ENCODE measurements at regions of chr17 and their contacts with region 1.

Region 1: DNA sequence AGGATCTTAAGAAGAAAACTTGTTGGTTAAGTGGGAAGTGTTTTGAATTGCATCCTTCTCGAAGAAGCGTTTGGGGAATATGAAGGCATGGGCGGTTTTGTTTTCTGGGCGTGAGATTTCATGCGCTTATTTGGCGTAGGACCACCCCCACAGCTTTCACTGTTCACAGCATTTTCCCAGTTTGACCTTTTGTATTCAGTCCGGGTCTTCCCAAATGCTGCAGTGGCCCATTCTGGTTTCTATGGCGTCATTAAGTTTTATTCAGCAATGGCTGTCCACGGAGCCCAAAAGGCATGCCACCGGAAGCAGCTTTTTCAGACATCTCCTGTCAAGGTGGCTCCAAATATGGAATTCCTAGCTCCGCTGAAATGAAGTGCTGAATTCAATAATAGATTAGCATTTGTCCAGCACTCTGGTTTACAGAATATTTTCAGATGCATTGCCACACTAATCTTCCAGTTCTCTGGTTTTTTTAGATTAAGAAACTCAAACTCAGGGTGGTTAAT is 90.6 kb upstream of the FBXO47 start:
- DNase-seq: no peak
- H3K4me3 ChIP-seq: peak overlapping the region; percentile 72
- H3K4me3 Mint-ChIP-seq: peak overlapping the region in 6 of 7 donors; percentile 48 to 90 (median 78)
- H3K27ac ChIP-seq: no peak overlapping the region
- H3K27ac Mint-ChIP-seq: peak overlapping the region in 3 of 8 donors; percentile 3 to 91 (median 43)
- H3K4me1 ChIP-seq: peaks cover 7% of the 10 kb centered on the region
- H3K4me1 Mint-ChIP-seq: peaks cover 4 to 16% (median 11%) of the 10 kb centered on the region in 3 donors
- H3K27me3 ChIP-seq: no peaks in the 10 kb centered on the region
- H3K27me3 Mint-ChIP-seq: peaks cover under 1% of the 10 kb centered on the region in 2 donors

Region 2: GRCh38 chr17:38943607-38944006 is 114.1 kb before region 1 on chr17:
- CTCF ChIA-PET with region 1: no interaction called
- POLR2A ChIA-PET with region 1: no interaction called
- DNase-seq: no peak
- H3K4me3 ChIP-seq: no peak overlapping the region
- H3K4me3 Mint-ChIP-seq: no peak overlapping the region
- H3K27ac ChIP-seq: no peak overlapping the region
- H3K27ac Mint-ChIP-seq: no peak overlapping the region
- H3K4me1 ChIP-seq: no peaks in the 10 kb centered on the region
- H3K4me1 Mint-ChIP-seq: peaks cover 0 to 2% (median 0%) of the 10 kb centered on the region in 3 donors
- H3K27me3 ChIP-seq: no peaks in the 10 kb centered on the region
- H3K27me3 Mint-ChIP-seq: no peaks in the 10 kb centered on the region

Region 3: GRCh38 chr17:39001703-39002637 is 55.8 kb before region 1 on chr17:
- CTCF ChIA-PET with region 1: no interaction called
- POLR2A ChIA-PET with region 1: no interaction called
- DNase-seq: no peak
- H3K4me3 ChIP-seq: no peak overlapping the region
- H3K4me3 Mint-ChIP-seq: no peak overlapping the region
- H3K27ac ChIP-seq: peak overlapping the region; percentile 40
- H3K27ac Mint-ChIP-seq: peak overlapping the region in 1 of 8 donors; percentile 72
- H3K4me1 ChIP-seq: peaks cover 25% of the 10 kb centered on the region
- H3K4me1 Mint-ChIP-seq: peaks cover 10 to 22% (median 14%) of the 10 kb centered on the region in 3 donors
- H3K27me3 ChIP-seq: no peaks in the 10 kb centered on the region
- H3K27me3 Mint-ChIP-seq: peaks cover 7 to 34% of the 10 kb centered on the region in 2 donors

Region 4: DNA sequence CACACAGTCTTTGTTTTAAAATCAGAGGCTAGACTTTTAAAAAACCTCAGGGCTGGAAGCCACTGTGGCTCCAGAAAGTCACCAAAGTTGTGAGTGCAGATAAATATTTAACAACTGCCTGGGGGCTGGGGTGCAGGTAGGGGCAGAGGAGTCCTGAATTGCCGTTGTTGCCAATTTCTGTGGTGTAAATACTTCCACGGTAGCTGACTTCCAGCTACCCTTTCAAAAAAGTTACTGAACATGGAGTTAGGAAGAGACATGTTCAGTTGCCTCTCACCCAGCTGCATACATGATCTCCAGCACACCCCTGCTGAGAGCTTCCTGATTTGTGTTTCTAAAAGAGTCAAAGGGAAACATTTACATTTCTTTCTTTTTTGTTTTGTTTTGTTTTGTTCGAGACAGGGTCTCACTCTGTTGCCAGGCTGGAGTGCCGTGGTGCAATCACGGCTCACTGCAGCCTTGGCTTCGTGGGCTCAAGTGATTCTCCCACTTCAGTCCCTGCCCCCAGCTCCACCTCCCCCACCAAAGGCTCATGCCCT is 35.0 kb after region 1 on chr17:
- CTCF ChIA-PET with region 1: interaction called, 11 read pairs
- POLR2A ChIA-PET with region 1: no interaction called
- DNase-seq: peak in 2 of 5 donors; percentile 21 to 61
- H3K4me3 ChIP-seq: peak overlapping the region; percentile 49
- H3K4me3 Mint-ChIP-seq: peak overlapping the region; percentile 77 to 93 (median 82)
- H3K27ac ChIP-seq: no peak overlapping the region
- H3K27ac Mint-ChIP-seq: peak overlapping the region; percentile 88 to 99 (median 94)
- H3K4me1 ChIP-seq: peaks cover 86% of the 10 kb centered on the region
- H3K4me1 Mint-ChIP-seq: peaks cover 62 to 78% (median 70%) of the 10 kb centered on the region in 3 donors
- H3K27me3 ChIP-seq: no peaks in the 10 kb centered on the region
- H3K27me3 Mint-ChIP-seq: no peaks in the 10 kb centered on the region

Region 5: DNA sequence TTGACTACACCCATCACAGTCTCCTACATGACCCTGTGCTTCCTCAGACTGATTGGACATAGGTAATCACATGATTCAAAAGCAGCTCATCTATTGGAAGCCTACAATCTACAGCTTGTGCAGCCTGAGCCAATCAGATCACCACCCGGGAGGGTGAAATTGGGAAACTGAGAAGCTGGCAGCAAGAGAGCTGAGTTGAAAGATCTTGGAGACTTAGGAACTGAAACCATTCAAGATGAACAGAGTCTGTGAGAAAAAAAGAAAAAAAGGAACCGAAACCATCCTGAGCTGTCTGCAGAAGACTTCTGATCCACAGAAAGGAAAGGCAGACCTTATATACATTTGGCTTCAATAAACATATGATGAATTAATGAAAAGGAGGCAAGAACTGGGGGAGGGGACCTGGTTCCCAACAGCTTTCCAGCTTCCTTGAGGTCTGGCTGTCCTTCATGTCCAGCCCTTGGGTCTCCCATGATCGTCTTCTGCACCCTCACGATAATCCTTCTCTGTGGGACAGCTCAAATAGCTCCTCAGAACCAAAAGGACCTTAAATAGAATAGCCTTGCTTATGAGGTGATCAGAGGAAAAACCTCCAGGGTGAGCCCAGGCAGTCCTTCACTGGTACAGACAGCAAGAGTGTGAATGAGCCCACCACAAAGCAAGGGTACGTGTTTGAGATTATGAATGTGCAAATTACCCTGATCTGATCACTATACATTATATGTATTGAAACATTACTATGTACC is 61.1 kb after region 1 on chr17:
- CTCF ChIA-PET with region 1: no interaction called
- POLR2A ChIA-PET with region 1: no interaction called
- DNase-seq: no peak
- H3K4me3 ChIP-seq: no peak overlapping the region
- H3K4me3 Mint-ChIP-seq: no peak overlapping the region
- H3K27ac ChIP-seq: no peak overlapping the region
- H3K27ac Mint-ChIP-seq: peak overlapping the region in 2 of 8 donors; percentile 11 to 64
- H3K4me1 ChIP-seq: no peaks in the 10 kb centered on the region
- H3K4me1 Mint-ChIP-seq: peaks cover 0 to 3% (median 3%) of the 10 kb centered on the region in 3 donors
- H3K27me3 ChIP-seq: no peaks in the 10 kb centered on the region
- H3K27me3 Mint-ChIP-seq: peaks cover 0 to 2% of the 10 kb centered on the region in 2 donors

Region 6: DNA sequence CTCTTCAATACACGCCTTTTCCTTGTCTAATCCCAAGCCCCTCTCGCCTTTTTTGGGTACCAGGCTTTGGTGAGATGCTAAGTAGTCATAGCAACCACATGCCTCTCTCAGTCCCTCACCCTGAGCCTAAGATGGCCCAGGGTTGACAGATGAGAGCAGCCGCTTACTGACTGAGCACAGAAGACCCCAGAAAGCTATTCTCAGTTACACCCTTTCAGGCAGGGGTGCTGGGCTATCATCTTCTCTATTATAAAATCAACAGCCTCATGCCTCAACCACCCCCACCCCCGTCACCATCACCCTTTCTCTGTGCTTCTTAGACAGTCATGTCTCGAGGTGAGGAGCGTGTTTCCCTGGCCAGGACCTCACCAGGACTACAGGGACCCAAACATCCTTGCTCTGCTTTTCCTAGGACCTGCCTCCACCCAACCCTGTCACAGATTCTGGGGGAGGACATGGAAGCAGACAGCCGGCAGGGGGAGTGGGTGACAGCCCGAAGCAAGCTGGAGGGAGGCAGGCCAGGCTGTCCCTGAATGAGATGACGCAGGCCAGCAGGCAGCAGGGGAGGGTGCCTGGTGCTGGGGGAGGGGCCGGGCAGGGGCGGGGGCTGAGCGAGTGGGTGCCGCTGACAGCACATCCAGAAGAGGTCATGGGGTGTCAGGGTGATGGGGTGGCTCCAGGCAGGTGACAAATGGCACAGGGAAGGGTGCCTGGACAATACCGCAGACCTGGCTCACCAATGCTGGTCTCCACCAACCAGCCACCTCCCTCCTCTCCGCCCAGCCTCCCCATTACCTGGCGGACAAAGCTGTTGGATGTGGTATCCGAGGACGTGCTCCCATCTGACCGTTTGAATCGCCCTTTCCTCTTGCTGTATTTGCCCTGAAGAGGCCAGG is 136.6 kb after region 1 on chr17:
- CTCF ChIA-PET with region 1: no interaction called
- POLR2A ChIA-PET with region 1: interaction called, 11 read pairs
- DNase-seq: no peak
- H3K4me3 ChIP-seq: no peak overlapping the region
- H3K4me3 Mint-ChIP-seq: peak overlapping the region in 3 of 7 donors; percentile 32 to 84 (median 47)
- H3K27ac ChIP-seq: no peak overlapping the region
- H3K27ac Mint-ChIP-seq: peak overlapping the region; percentile 43 to 93 (median 56)
- H3K4me1 ChIP-seq: peaks cover 28% of the 10 kb centered on the region
- H3K4me1 Mint-ChIP-seq: peaks cover 30 to 56% (median 36%) of the 10 kb centered on the region in 3 donors
- H3K27me3 ChIP-seq: no peaks in the 10 kb centered on the region
- H3K27me3 Mint-ChIP-seq: no peaks in the 10 kb centered on the region